Dorsolateral prefrontal cortex (tissue), 120 donors: ENCODE measurements at regions of chr14 and their contacts with region 1.

Region 1: GRCh38 chr14:54038724-54039123 is 82.1 kb upstream of the BMP4 start:
- DNase-seq: no peak
- H3K4me3 ChIP-seq: no peak overlapping the region
- H3K27ac ChIP-seq: no peak overlapping the region
- H3K27me3 ChIP-seq: peaks cover 0 to 5% (median 0%) of the 10 kb centered on the region in 45 donors
- CTCF ChIP-seq: no peak

Region 2: DNA sequence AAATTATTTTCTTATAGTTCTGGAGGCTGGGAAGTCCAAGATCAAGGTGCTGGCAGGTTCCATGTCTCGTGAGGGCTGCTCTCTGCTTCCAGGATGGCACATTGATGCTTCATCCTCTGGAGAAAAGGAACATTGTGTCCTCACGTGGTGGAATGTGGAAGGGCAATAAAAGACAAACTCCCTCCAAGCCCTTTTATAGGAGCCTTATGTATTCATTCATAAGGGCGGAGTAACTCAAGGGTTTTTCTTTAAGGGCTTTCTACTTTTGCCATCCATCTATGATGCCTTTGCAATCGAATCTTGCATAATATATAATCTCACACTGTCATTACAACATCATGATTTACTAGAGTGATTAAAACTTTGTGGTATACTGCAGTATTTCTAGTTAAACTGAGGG is 752.9 kb before region 1 on chr14:
- intact Hi-C with region 1: loop called in 1 of 2 experiments (anchors 5 kb)
- DNase-seq: no peak
- H3K4me3 ChIP-seq: no peak overlapping the region
- H3K27ac ChIP-seq: no peak overlapping the region
- H3K27me3 ChIP-seq: no peaks in the 10 kb centered on the region
- CTCF ChIP-seq: no peak

Region 3: GRCh38 chr14:54396493-54397335 is 358.0 kb after region 1 on chr14 and contains the start of gene CDKN3:
- intact Hi-C with region 1: no loop called
- DNase-seq: peak; percentile 90 to 99 (median 98)
- H3K4me3 ChIP-seq: peak within 1 kb of the TSS; percentile 62 to 98 (median 85)
- H3K27ac ChIP-seq: peak within 1 kb of the TSS in 10 of 59 donors; percentile 4 to 72 (median 58)
- H3K27me3 ChIP-seq: no peaks in the 10 kb centered on the region
- CTCF ChIP-seq: peak; percentile 25 to 88 (median 72)
- total RNA-seq, gene CDKN3: 0.73 to 10.0 (median 3.9) TPM